ENCODE measurements at regions of chr22 and their contacts with region 1.

Region 1: GRCh38 chr22:22884010-22884887 is 3.4 kb upstream of the IGLL5 start:
- DNase-seq: peak; percentile 84
- ATAC-seq: peak; percentile 81
- H3K4me3 Mint-ChIP-seq: no peak overlapping the region
- H3K27ac Mint-ChIP-seq: no peak overlapping the region
- H3K4me1 Mint-ChIP-seq: peaks cover 20% of the 10 kb centered on the region
- H3K27me3 Mint-ChIP-seq: peaks cover 33% of the 10 kb centered on the region

Region 2: DNA sequence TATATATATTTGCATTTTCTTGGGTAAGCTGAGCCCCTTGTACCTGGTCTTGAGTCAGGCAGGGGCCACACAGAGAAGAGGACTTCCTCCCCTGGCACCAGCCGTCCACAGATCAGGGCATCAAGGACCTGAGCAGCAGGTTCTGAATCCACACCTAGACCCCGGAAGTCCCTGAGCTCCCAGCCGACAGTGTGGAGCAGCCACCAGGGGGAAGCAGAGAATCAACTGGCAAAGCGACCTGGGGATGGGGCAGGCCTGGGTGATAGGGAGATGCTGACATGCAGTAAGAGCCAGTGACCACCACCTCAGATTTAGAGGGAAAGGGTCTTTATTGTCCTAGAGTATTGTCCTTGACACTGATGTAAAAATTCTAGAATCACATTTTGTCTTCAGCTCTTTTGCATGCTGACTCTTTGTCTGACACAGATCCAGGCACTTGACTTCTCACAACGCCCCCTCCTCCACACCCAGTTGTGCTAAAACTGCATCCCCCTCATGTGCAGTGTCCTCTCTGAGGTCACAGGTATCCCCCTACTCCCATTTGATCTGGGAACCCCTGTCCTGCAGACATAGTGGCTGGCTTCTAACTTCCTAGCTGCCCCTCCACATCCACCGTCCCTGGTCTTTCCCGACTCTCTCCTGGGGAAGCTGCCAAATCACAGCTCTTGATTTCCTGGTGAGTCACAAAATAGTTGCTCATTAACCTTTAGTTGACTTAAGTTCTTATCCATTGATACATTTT is 130.6 kb before region 1 on chr22:
- CTCF ChIA-PET with region 1: interaction called, 76 read pairs
- DNase-seq: peak; percentile 89
- ATAC-seq: peak; percentile 97
- H3K4me3 Mint-ChIP-seq: no peak overlapping the region
- H3K27ac Mint-ChIP-seq: no peak overlapping the region
- H3K4me1 Mint-ChIP-seq: peaks cover 20% of the 10 kb centered on the region
- H3K27me3 Mint-ChIP-seq: no peaks in the 10 kb centered on the region

Region 3: DNA sequence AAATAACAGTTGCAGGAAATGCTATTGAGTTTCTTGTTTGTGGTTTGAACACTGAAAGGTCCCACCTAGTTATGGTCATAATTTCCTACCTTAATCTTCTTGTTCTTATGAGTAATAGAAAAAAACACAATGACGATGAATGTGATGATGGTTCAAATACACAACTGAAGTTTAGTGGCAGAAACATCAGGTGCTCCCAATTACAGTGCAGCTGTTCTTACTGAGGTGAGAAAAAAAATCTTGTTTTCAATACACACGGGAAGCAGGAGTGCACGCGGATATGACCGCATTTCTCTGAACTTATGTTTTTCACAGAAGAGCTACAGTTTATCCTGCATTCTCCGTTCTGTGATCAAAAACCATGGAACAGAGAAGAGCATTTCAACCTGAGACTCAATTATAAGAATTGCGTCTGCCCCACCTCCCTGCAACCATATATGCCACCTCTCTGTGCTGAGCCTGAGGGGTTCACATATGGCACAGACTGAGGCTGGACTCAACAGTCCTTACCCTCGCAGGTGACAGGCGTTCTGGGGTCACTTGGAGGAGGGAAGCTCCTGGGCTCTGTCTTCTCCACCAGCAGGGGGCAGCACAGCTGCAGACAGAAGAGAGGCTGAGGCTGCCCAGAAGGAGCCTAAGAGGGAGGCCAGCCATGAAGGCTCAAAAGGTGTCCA is 96.3 kb before region 1 on chr22:
- CTCF ChIA-PET with region 1: interaction called, 80 read pairs
- DNase-seq: peak; percentile 78
- ATAC-seq: peak; percentile 86
- H3K4me3 Mint-ChIP-seq: no peak overlapping the region
- H3K27ac Mint-ChIP-seq: peak overlapping the region; percentile 17
- H3K4me1 Mint-ChIP-seq: peaks cover 28% of the 10 kb centered on the region
- H3K27me3 Mint-ChIP-seq: peaks cover 3% of the 10 kb centered on the region

Region 4: DNA sequence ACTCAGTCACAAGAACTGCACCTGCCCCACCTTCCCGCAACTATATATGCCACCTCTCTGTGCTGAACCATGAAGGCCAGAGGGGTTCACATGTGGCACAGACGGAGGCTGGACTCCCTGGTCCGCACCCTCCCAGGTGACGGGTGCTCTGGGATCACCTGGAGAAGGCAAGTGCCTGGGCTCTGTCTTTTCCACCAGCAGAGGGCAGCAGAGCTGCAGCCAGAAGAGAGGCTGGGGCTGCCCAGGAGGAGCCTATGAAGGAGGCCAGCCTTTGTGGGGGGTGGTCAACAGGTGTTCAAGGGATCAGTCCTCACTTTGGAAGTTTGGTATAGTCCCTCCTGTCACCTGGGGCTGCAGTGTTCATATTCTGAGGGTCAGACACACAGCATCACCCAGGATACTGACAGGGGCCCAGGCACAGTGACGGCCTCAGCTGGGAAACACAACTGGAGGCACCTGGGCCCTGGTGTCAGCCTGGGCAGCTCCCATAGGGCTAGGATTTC is 35.8 kb before region 1 on chr22:
- CTCF ChIA-PET with region 1: interaction called, 223 read pairs
- DNase-seq: peak; percentile 77
- ATAC-seq: peak; percentile 90
- H3K4me3 Mint-ChIP-seq: no peak overlapping the region
- H3K27ac Mint-ChIP-seq: no peak overlapping the region
- H3K4me1 Mint-ChIP-seq: peaks cover 10% of the 10 kb centered on the region
- H3K27me3 Mint-ChIP-seq: peaks cover 26% of the 10 kb centered on the region

Region 5: DNA sequence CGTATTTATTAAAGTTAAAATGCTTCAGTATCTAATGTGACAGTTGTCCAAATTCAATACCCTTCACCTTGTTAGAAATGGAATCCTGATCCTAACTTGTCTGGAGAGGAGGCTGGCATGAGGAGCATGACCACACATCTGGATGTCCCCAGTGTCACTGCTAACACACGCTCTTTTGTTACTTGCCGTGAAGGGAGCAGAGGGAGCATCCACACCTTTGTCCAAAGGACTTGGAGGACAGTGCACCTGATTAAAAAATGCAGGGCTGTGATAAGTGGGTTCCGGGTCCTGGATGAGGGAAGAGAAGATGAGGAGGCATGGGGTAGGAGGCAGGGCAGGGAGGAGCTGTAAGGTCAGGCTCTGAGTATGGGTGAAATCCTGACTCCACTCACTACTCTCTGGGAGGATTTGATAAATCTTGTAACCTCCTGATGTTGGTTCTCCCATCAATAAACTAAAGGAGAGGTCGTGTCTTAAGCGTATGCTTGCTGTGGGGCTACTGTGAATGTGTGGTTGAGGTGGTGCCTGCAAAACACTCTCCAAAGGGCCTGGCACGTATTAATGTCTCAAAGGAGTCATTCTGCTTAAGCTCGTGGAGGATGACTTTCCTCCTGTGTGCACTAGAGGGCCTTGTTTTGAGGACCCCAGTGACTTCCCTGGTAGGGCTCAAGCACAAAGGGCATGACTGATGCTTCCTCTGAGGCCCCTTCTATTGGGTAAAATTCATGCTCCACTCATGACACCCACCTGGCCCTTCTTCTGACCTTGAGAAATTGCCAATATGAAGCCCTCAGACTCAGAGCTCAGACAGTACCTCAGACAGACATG is 13.5 kb before region 1 on chr22:
- CTCF ChIA-PET with region 1: interaction called, 15 read pairs
- DNase-seq: no peak
- ATAC-seq: no peak
- H3K4me3 Mint-ChIP-seq: no peak overlapping the region
- H3K27ac Mint-ChIP-seq: no peak overlapping the region
- H3K4me1 Mint-ChIP-seq: peaks cover 8% of the 10 kb centered on the region
- H3K27me3 Mint-ChIP-seq: peaks cover 40% of the 10 kb centered on the region

Region 6: GRCh38 chr22:22959147-22959827 is 75.0 kb after region 1 on chr22:
- CTCF ChIA-PET with region 1: interaction called, 101 read pairs
- DNase-seq: peak; percentile 78
- ATAC-seq: peak; percentile 60
- H3K4me3 Mint-ChIP-seq: no peak overlapping the region
- H3K27ac Mint-ChIP-seq: no peak overlapping the region
- H3K4me1 Mint-ChIP-seq: peaks cover 2% of the 10 kb centered on the region
- H3K27me3 Mint-ChIP-seq: peaks cover 48% of the 10 kb centered on the region